ENCODE measurements at regions of chr19 and their contacts with region 1.

Region 1: DNA sequence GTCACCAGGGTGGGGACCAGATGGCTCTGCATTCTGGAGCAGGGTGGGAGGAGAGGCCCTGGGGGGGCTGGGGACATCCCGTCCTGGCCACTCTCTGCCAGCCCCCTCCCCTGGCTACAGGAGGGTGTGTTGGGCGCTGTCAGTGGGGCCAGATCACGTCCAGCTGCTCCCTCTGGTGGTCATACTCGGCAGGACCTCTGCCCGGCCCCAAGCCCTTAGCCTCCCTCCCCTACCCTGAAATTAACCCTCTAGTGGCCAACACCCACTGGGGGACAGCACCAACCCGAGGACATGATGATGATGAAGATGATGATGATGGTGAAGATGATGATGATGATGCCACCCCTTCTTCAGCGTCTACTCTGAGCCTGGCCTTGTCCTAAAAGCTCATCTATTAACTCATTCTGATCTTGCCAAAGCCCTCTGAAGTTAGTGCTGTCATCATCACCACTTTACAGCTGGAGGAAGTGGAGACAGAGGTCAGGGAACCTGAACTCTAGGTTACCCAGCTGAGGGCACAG is 590 bp upstream of the LGI4 start:
- DNase-seq: peak; percentile 64
- H3K4me3 Mint-ChIP-seq: no peak overlapping the region
- H3K27ac Mint-ChIP-seq: no peak overlapping the region
- H3K4me1 Mint-ChIP-seq: peaks cover 2% of the 10 kb centered on the region
- H3K27me3 Mint-ChIP-seq: peaks cover 7% of the 10 kb centered on the region

Region 2: DNA sequence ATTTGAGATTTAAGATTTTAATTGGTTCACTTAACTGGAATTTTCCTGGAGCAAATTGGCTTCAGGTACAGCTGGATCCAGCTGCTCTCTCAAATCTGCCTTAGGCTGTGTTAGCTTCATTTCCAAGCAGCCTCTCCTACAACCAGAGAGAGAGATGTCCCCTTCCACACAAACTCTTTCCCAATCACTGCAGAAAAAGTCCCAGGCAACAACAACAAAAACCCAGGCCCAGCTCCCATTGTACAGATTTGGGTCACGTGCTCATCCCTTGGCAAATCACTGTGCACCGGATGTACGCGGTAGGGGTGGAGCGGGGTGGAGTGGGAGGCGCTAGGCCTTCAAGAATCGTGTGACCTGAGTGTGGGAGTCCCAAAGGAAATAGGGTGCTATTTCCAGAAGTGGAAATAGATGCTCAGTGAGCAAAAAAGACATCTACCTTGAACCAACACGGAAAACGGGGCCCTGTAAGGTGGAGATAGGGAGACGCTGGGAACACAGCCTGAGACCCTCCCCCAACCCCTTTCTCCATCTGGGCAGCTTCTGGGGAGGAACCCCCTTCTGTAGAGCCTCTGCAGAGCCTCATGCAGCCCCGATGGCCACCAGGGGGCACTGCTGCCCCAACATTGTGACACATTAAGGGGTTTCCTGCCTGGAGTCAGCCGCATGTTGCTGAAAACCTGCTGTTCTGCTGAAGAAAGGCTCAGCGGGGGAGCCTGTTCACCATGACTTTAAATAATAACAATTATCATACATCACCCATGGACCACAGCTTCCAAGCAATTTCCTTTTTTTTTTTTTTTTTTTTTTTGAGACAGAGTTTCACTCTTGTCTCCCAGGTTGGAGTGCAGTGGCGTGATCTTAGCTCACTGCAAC is 68.5 kb before region 1 on chr19:
- intact Hi-C with region 1: loop called (anchors 5 kb)
- DNase-seq: peak; percentile 75
- H3K4me3 Mint-ChIP-seq: no peak overlapping the region
- H3K27ac Mint-ChIP-seq: peak overlapping the region; percentile 27
- H3K4me1 Mint-ChIP-seq: peaks cover 10% of the 10 kb centered on the region
- H3K27me3 Mint-ChIP-seq: no peaks in the 10 kb centered on the region

Region 3: GRCh38 chr19:35114353-35115176 is 20.9 kb before region 1 on chr19:
- intact Hi-C with region 1: loop called (anchors 1 kb)
- DNase-seq: peak; percentile 40
- H3K4me3 Mint-ChIP-seq: no peak overlapping the region
- H3K27ac Mint-ChIP-seq: no peak overlapping the region
- H3K4me1 Mint-ChIP-seq: peaks cover 4% of the 10 kb centered on the region
- H3K27me3 Mint-ChIP-seq: no peaks in the 10 kb centered on the region

Region 4: DNA sequence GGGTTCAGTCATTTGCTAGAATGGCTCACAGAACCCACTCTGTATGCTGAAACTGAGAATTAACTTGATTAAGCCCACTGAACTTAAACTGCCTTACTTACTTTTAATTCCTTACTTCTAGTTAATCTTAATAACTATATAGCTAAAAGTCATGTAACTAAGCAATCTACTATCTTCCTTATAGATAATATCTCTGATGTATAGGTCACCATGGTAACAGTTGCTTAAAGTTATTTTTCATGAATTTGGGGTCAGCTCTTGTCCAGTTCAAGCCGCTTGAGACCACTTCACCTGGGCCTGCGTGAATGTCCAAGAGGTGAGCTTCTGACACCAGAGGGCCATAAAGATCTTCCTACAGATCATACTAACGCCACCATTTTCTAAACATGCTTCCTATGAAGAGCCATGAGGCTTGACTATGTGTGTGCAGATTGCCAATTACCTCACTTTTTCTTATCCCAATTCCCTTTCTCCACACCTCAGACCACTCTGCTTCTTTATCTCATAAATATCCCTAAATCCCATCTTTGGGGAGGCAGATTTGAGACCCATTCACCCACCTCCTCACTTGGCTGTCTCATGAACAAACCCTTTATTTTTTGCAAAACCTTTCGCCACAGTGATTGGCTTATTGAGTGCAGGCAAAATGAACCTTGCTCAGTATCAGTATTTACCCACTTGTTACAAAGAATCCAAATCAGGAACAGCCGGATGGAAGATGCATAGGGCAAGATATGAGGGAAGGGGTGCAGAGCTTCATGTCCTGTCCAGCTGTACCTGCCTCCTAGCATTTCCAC is 58.6 kb after region 1 on chr19:
- intact Hi-C with region 1: no loop called
- DNase-seq: no peak
- H3K4me3 Mint-ChIP-seq: no peak overlapping the region
- H3K27ac Mint-ChIP-seq: no peak overlapping the region
- H3K4me1 Mint-ChIP-seq: peaks cover 9% of the 10 kb centered on the region
- H3K27me3 Mint-ChIP-seq: peaks cover 22% of the 10 kb centered on the region